Right ventricle myocardium inferior (tissue), 1 donor: ENCODE measurements at regions of chr9 and their contacts with region 1.

Region 1: DNA sequence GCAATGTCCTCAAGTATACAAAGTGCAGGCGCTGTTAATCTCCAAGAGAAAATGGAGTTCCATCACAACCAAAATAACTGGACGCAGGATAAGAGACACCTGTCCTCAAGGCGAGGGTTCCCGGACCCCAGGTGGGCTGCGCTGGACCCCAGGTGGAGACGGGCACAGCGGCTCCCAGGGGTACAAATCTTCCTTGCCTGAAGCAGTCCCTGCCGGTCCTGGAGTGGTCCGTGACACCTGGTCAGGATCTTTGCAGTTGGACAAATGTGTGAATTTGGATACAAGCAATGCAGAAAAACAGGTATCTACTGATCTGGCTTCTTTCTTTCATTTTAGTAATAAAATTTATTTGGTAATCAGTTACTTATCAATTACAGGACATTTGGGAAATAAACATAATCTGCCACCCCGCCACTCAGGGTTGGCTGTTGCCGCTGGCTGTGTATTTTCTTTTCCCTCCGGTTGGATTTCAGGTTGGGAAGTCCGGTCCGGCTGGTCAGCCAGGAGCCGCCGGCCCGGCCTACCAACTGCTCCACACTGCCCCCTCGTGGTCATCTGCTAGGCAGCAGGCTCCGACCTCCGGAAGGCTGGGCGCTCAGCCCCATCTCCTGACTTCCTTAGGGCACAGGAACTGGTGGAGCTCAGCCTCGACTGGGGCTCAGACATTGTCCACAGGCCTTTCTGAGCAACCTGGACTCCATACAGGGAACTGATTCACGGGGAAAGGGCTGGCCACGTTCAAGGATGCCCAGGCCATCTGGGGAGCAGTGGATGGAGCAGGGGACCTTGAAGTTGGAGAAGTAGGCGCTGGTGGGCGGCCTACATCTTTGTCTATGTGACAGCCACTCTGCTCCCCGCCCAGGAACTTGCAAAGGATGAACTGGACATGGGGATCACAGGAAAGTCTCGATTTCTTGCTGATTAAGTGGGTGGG is 43.4 kb downstream of the NXNL2 start:
- DNase-seq: peak; percentile 92
- ATAC-seq: peak; percentile 81

Region 2: GRCh38 chr9:87678650-87679515 is 899.5 kb before region 1 on chr9:
- intact Hi-C with region 1: loop called (anchors 2 kb)
- DNase-seq: no peak
- ATAC-seq: peak; percentile 27

Region 3: DNA sequence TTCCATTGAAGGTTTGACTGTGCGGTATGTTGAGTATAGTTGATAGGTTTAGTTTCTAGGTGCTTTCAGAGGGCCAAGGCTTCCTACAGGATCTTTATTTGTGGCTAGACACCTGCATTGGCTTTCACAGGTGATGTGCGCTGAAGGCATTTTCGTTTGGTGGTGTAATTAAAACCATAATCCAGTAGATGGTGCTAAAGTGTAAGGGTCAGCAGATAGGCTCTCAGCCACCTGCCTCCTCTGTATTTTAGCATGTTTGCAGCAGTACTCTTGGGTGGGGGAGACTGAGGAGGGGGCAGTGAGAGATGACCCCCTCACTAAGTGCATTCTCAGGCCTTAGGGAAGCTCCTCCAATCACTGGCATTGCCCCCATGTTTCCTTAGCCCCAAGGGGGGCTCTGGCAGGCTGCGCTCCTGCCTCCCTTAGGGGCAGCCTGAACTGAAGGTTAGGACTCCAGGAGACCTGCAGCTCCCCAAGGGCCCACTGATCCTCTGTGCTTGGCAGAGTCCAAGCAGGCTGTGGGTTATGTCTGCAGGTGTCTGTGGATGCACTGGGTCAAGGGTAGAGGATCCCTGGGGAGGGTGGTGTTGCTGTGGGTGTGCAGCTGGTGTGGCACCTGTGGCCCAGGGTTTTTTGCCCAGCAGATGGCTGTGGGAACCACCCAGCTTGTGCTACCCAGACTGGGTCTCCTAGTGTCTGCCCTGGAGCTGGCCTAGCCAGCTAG is 627.5 kb before region 1 on chr9:
- intact Hi-C with region 1: loop called (anchors 2 kb)
- DNase-seq: no peak
- ATAC-seq: no peak

Region 4: DNA sequence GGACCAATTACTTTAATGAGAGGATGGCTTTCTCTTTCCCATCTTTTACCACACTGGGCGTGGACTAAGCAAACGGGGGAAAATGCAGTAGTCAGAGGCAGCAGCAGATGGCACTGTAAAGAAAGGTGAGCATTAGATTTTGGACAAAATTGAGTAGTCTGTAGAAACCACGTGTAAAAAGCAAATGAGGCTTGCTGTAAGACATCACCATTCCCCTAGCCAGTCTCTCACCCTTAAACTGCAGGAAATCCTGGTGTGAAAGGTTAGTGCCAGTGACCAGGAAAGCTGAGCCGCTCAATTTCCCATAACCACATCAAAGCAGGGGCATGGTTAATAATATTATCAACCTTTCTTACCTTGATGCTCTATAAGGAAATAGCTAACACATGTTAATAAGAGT is 471.9 kb before region 1 on chr9:
- intact Hi-C with region 1: loop called (anchors 2 kb)
- DNase-seq: no peak
- ATAC-seq: no peak

Region 5: GRCh38 chr9:88173378-88173999 is 404.9 kb before region 1 on chr9:
- intact Hi-C with region 1: loop called (anchors 5 kb)
- DNase-seq: no peak
- ATAC-seq: no peak

Region 6: GRCh38 chr9:88303721-88304451 is 274.5 kb before region 1 on chr9:
- intact Hi-C with region 1: loop called (anchors 10 kb)
- DNase-seq: no peak
- ATAC-seq: no peak

Region 7: DNA sequence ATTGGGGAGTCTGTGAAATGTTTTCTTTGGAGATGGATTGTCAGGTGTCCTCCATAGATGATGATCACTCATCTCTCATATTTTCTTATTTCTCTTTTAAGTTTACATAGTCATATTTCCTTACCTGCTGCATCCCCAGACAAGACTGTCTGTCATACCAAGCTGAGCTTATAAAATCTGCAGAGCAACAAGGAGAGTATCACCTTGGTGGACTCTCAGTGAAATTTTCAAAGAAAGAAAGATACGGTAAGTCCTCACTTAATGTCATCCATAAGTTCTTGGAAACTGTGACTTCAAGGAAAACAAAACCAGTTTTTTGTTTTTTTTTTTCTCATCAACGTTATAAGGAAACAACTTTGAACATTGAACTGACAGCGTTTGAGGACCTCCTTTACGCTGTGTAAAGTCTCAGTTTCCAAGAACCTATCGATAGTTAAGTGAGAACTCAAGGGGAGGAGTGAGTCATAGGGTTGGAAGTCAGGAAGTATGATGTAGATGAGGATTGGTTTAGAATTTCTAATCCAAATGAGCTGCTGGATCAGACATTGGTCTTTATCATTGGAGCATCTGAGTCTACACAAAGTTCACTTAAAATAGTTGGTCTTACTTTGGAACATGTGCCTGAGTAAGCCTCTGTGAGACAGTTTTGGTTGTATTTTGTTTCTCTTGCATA is 144.7 kb before region 1 on chr9:
- intact Hi-C with region 1: no loop called
- DNase-seq: no peak
- ATAC-seq: no peak

Region 8: GRCh38 chr9:88965473-88965872 is 387.1 kb after region 1 on chr9:
- intact Hi-C with region 1: no loop called
- DNase-seq: no peak
- ATAC-seq: peak; percentile 89